H1 (cell line): ENCODE measurements at regions of chr17 and their contacts with region 1.

Region 1: DNA sequence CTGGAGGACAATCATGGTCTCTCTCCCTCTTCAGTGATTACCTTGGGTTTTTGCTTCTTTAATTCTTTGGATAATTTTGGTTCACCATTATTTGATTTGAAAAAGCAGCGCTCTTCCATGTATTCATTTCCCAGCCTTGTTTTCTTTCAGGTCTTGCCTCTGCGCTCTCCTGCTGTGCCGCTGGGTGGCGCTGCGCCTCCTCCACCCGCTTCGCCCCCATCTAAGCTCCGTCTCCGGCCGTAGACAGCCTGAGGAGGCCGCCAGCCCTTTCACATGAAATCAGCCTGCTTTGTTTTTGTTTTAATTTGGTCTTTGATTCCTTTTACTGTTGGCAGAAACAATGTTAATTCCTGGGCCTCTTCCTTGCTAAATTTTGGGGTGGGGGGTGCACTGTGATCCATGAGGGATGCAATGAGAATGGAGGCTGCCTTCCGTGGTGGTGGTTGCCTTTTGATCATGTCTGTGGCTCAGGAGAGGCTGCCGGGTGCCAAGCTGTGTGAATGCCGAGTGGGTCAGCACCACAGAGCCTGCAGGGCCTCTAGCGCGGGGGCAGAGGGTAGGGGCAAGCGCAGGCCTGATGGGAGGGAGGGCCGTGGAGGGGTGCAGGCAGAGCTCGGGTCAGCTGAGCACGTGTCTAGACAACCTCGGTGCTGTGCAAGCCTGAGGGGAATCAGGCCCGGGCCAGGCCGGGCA is 64.1 kb downstream of the PLD6 start:
- DNase-seq: peak in 1 of 2 experiments; percentile 83
- H3K4me3 ChIP-seq: no peak overlapping the region
- H3K27ac ChIP-seq: no peak overlapping the region
- H3K4me1 ChIP-seq: peaks cover 0 to 17% (median 3%) of the 10 kb centered on the region in 4 experiments; a peak in 5 of 7 replicates
- H3K27me3 ChIP-seq: no peaks in the 10 kb centered on the region
- CTCF ChIP-seq: peak; percentile 80 to 97 (median 95)
- EP300 ChIP-seq: no peak
- POLR2A ChIP-seq: no peak
- RAD21 ChIP-seq: peak; percentile 75 to 80

Region 2: GRCh38 chr17:16938496-16939207 is 203.4 kb before region 1 on chr17:
- CTCF ChIA-PET with region 1: no interaction called
- POLR2A ChIA-PET with region 1: no interaction called
- DNase-seq: no peak
- H3K4me3 ChIP-seq: no peak overlapping the region
- H3K27ac ChIP-seq: no peak overlapping the region
- H3K4me1 ChIP-seq: peaks cover 1 to 14% (median 5%) of the 10 kb centered on the region in 4 experiments; a peak in 5 of 7 replicates
- H3K27me3 ChIP-seq: no peaks in the 10 kb centered on the region
- CTCF ChIP-seq: no peak
- EP300 ChIP-seq: no peak
- POLR2A ChIP-seq: no peak
- RAD21 ChIP-seq: no peak

Region 3: GRCh38 chr17:16952401-16952800 is 189.6 kb before region 1 on chr17:
- CTCF ChIA-PET with region 1: no interaction called
- POLR2A ChIA-PET with region 1: no interaction called
- DNase-seq: peak in 1 of 2 experiments; percentile 35
- H3K4me3 ChIP-seq: no peak overlapping the region
- H3K27ac ChIP-seq: no peak overlapping the region
- H3K4me1 ChIP-seq: no peaks in the 10 kb centered on the region
- H3K27me3 ChIP-seq: no peaks in the 10 kb centered on the region
- CTCF ChIP-seq: no peak
- EP300 ChIP-seq: no peak
- POLR2A ChIP-seq: no peak
- RAD21 ChIP-seq: no peak

Region 4: GRCh38 chr17:17016199-17016866 is 125.7 kb before region 1 on chr17:
- CTCF ChIA-PET with region 1: interaction called, 14 read pairs
- POLR2A ChIA-PET with region 1: no interaction called
- DNase-seq: no peak
- H3K4me3 ChIP-seq: no peak overlapping the region
- H3K27ac ChIP-seq: no peak overlapping the region
- H3K4me1 ChIP-seq: no peaks in the 10 kb centered on the region; a peak in 3 of 7 replicates
- H3K27me3 ChIP-seq: no peaks in the 10 kb centered on the region
- CTCF ChIP-seq: no peak
- EP300 ChIP-seq: no peak
- POLR2A ChIP-seq: no peak
- RAD21 ChIP-seq: no peak

Region 5: DNA sequence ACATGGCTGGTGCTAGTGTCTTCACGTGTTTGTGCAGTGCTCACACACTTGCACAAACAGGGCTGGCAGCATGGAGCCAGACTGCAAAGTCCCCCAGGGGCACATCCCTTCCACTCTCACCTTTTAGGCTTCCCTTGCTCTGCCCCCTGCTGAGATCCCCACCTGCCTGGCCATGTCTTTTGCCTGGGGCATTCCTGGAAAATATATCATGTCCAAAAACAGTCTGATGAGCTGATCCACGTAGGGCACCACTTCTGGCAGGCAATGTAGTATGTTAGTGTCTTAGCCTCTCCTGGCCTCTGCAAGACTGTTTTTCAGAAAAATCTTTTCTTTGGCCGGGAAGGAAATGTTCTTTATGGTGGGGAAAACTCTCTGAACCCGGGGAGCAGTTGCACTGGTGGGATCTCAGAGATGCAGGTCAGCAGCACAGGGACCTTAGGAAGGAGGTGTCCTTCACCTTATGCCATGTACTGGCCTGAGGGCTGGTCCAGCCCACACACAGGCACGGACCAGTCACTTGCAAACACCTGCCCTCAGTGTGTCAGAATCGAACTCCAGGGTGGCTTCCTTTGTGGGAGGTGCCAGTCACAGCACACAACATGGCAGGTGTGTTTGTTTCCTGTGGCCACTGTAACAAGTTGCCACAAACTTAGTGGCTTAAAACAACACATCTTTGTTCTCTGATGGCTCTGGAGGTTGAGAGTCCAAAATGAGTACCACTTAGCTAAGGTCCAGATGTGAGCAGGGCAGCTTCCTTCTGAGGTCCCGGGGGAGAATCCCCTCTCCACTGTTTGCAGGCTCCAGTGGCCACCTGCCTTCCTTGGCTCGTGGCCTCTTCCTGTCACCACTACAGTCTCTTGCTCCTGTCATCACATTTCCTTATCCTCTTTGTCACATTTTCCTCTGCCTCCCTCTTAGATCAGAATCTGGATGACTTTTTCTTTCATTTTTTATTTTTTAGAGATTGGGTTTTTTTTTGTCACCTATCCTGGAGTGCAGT is 53.2 kb before region 1 on chr17:
- CTCF ChIA-PET with region 1: interaction called, 14 read pairs
- POLR2A ChIA-PET with region 1: no interaction called
- DNase-seq: no peak
- H3K4me3 ChIP-seq: no peak overlapping the region
- H3K27ac ChIP-seq: no peak overlapping the region
- H3K4me1 ChIP-seq: peaks cover 0 to 17% (median 2%) of the 10 kb centered on the region in 4 experiments; a peak in 4 of 7 replicates
- H3K27me3 ChIP-seq: no peaks in the 10 kb centered on the region
- CTCF ChIP-seq: no peak
- EP300 ChIP-seq: no peak
- POLR2A ChIP-seq: no peak
- RAD21 ChIP-seq: no peak

Region 6: DNA sequence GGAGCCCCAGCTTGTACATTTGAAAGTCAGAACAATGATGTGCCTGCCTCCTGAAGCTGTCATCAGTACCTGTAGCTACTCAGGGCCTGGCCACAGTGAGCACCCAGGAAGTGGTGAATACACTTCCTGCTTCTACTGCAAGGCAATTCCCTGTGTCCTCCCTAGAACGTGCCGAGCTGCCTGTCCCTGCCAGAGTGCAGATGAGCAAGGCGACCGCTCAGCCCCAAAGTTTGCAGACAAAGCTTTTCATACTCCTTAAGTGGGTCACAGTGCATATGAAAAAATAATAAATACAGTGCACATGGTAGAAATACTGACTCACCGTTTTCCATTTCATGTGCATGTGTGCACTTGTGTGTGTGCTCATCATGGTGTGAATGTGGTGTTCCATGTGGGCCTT is 22.5 kb before region 1 on chr17:
- CTCF ChIA-PET with region 1: interaction called, 117 read pairs
- POLR2A ChIA-PET with region 1: no interaction called
- DNase-seq: no peak
- H3K4me3 ChIP-seq: no peak overlapping the region
- H3K27ac ChIP-seq: no peak overlapping the region
- H3K4me1 ChIP-seq: no peaks in the 10 kb centered on the region; a peak in 2 of 7 replicates
- H3K27me3 ChIP-seq: no peaks in the 10 kb centered on the region
- CTCF ChIP-seq: no peak
- EP300 ChIP-seq: no peak
- POLR2A ChIP-seq: no peak
- RAD21 ChIP-seq: no peak

Region 7: DNA sequence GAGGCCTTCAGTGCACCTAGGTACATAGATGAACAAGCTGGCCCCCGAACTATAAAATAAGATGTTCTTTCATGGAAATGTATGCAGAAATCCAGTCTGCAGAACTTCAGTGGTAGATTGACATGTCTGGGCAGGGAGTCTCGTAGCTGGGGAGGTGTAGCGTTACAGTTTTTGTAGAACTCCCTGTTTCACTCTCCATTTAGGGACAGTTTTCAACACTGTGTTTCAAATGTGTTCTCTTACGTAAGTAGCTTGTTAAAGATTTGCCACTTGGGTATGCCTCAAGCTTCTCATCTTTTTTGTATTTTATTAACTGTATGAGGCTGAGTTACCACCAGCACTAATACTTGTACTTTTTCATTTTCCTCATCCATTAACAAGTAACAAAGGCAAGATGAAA is 17.6 kb after region 1 on chr17:
- CTCF ChIA-PET with region 1: interaction called, 67 read pairs
- POLR2A ChIA-PET with region 1: no interaction called
- DNase-seq: no peak
- H3K4me3 ChIP-seq: no peak overlapping the region
- H3K27ac ChIP-seq: no peak overlapping the region
- H3K4me1 ChIP-seq: no peaks in the 10 kb centered on the region
- H3K27me3 ChIP-seq: no peaks in the 10 kb centered on the region
- CTCF ChIP-seq: no peak
- EP300 ChIP-seq: no peak
- POLR2A ChIP-seq: no peak
- RAD21 ChIP-seq: no peak

Region 8: DNA sequence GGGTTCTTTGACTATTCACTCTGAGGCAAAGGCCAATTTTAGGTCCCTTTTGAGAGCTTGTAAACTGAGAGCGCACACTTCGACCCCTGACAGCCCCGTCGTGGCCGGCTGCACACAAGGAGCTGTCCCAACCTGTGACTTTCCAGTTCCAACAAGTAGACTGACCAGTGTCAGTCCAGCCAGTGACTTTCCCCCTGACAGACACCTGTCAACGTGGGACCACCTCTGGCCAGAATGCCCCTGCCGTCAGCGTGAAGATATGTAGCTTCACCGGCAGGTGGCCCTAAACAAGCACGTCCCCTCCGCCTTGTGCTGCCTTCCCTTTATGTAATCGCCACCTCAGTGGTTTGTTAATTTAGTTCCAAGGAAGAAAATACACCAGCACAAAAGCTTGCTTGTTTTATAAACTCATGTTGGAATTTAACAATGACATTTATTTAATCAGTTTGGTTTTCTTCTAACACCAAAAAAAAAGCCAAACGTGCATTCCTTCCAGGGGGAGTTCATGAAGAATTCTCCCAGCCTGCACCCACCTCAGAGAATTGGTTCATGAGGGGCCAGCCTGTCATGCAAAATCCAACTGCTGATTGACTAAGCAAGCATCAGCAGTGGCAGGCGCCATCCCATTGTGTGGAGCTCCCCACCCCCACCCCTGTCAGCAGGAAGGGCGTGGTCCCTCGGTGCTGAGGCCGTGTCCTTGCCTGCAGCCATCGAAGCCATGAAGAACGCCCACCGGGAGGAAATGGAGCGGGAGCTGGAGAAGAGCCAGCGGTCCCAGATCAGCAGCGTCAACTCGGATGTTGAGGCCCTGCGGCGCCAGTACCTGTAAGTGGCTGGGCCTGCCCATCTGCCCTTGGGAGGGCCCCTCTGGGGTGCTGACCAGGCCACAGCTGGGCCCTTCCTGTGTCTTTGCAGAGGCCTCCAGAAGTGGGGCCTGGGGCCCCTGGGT is 30.3 kb after region 1 on chr17:
- CTCF ChIA-PET with region 1: interaction called, 44 read pairs
- POLR2A ChIA-PET with region 1: no interaction called
- DNase-seq: no peak
- H3K4me3 ChIP-seq: no peak overlapping the region
- H3K27ac ChIP-seq: no peak overlapping the region
- H3K4me1 ChIP-seq: no peaks in the 10 kb centered on the region
- H3K27me3 ChIP-seq: no peaks in the 10 kb centered on the region; a peak in 1 of 7 replicates
- CTCF ChIP-seq: peak in 1 of 3 experiments; percentile 9; a peak in 2 of 4 replicates
- EP300 ChIP-seq: no peak
- POLR2A ChIP-seq: no peak
- RAD21 ChIP-seq: no peak; a peak in 1 of 4 replicates

Region 9: GRCh38 chr17:17385491-17385890 is 243.5 kb after region 1 on chr17:
- CTCF ChIA-PET with region 1: no interaction called
- POLR2A ChIA-PET with region 1: no interaction called
- DNase-seq: no peak
- H3K4me3 ChIP-seq: no peak overlapping the region
- H3K27ac ChIP-seq: no peak overlapping the region
- H3K4me1 ChIP-seq: no peaks in the 10 kb centered on the region; a peak in 1 of 7 replicates
- H3K27me3 ChIP-seq: no peaks in the 10 kb centered on the region
- CTCF ChIP-seq: no peak
- EP300 ChIP-seq: no peak
- POLR2A ChIP-seq: no peak
- RAD21 ChIP-seq: no peak